ENCODE measurements at regions of chr16 and their contacts with region 1.

Region 1: GRCh38 chr16:1312903-1313302 is 3.5 kb downstream of the UBE2I start:
- DNase-seq: no peak
- H3K4me3 ChIP-seq: no peak overlapping the region
- H3K4me3 Mint-ChIP-seq: no peak overlapping the region
- H3K27ac Mint-ChIP-seq: no peak overlapping the region
- H3K4me1 ChIP-seq: peaks cover 5% of the 10 kb centered on the region; the same call in 1 of the 2 replicates
- H3K4me1 Mint-ChIP-seq: no peaks in the 10 kb centered on the region
- H3K27me3 ChIP-seq: no peaks in the 10 kb centered on the region
- H3K27me3 Mint-ChIP-seq: no peaks in the 10 kb centered on the region
- CTCF ChIP-seq: no peak

Region 2: GRCh38 chr16:1335996-1336395 is 23.1 kb after region 1 on chr16:
- CTCF ChIA-PET with region 1: interaction called, 11 read pairs
- POLR2A ChIA-PET with region 1: no interaction called
- intact Hi-C with region 1: no loop called
- DNase-seq: no peak
- H3K4me3 ChIP-seq: no peak overlapping the region
- H3K4me3 Mint-ChIP-seq: no peak overlapping the region
- H3K27ac Mint-ChIP-seq: no peak overlapping the region
- H3K4me1 ChIP-seq: peaks cover 4% of the 10 kb centered on the region; the same call in 1 of the 2 replicates
- H3K4me1 Mint-ChIP-seq: no peaks in the 10 kb centered on the region
- H3K27me3 ChIP-seq: peaks cover 1% of the 10 kb centered on the region; the same call in 1 of the 2 replicates
- H3K27me3 Mint-ChIP-seq: peaks cover 3% of the 10 kb centered on the region
- CTCF ChIP-seq: no peak